Right ventricle myocardium inferior (tissue), 1 donor: ENCODE measurements at regions of chr9 and their contacts with region 1.

Region 1: GRCh38 chr9:35657546-35658136 is at the start of gene RMRP:
- DNase-seq: peak; percentile 97
- ATAC-seq: peak; percentile 97
- total RNA-seq, gene RMRP: 15,747 TPM

Region 2: DNA sequence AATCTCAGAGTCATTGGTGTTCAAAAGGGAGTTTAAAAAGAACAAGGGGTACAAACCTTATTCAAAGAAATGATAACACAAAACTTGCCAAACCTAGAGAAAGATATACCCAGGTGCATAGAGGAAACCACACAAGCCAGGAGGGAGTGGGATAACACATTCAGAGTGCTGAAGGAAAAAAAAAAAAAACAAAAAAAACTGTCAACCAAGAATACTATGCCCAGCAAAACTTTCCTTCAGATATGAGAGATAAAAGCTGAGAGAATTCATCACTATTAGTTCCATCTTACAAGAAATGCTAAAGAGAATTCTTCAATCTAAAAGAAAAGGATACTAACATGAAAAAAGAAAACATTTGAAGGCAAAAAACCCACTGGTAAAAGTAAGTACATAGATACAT is 64.1 kb before region 1 on chr9:
- intact Hi-C with region 1: no loop called
- DNase-seq: no peak
- ATAC-seq: no peak

Region 3: GRCh38 chr9:35603987-35604577 is 53.6 kb before region 1 on chr9:
- intact Hi-C with region 1: loop called (anchors 2 kb)
- DNase-seq: peak; percentile 100
- ATAC-seq: peak; percentile 97

Region 4: DNA sequence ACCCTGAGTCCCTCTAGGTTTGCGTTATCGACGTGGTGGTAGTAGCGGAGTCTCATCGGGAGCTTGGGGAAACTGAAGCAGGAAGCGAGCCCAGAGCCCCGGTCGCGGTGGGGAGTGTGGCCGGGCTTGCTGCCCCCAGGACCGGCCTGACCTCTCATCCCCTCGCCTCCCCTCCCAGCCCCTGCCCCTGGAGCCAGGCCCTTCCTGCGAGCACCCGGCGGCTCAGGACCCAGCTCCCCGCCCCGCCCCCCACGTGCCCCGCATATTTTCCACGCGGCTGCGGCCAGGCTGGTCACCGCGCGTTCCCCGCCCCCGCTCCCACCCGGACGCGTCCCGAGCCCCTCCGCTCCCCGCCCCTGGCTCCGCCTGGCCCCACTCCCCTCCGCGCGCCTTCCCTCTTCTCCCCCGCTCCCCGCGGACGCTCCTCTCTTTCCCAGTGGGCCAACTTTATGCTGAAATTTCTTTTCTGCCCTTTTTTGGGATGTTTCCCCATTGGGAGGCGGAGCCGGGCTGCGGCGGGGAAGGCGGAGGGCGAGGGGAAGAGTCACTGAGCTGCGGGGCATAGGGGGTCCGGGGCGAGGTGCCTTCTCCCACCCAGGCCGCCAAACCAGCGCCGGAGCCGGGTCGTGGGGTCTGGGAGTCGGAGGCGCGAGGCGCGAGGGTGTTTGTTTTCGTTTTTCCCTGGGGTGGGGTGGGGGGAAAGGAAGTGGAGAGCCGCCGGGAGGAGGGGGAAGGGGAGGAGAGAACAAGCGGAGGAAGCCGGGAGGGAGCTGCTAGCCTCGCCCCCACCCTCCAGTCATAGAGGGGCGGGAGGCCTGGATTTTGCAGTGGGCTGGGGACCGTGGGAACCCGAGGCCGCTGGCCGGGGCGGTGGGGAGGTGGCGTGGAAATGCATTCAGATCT is 33.0 kb after region 1 on chr9:
- intact Hi-C with region 1: loop called (anchors 2 kb)
- DNase-seq: peak; percentile 87
- ATAC-seq: peak; percentile 69

Region 5: GRCh38 chr9:35732122-35732799 is 74.6 kb after region 1 on chr9 and contains the starts of genes CREB3 and TLN1:
- intact Hi-C with region 1: loop called (anchors 2 kb)
- DNase-seq: peak; percentile 99
- ATAC-seq: peak; percentile 94
- total RNA-seq, gene CREB3: 23.5 TPM
- total RNA-seq, gene TLN1: 255 TPM

Region 6: GRCh38 chr9:35754264-35754663 is 96.6 kb after region 1 on chr9 and contains the start of gene MSMP:
- intact Hi-C with region 1: loop called (anchors 1 kb)
- DNase-seq: no peak
- ATAC-seq: no peak
- total RNA-seq, gene MSMP: not detected

Region 7: GRCh38 chr9:35829084-35829763 is 171.6 kb after region 1 on chr9 and contains the start of gene TMEM8B:
- intact Hi-C with region 1: loop called (anchors 5 kb)
- DNase-seq: peak; percentile 99
- ATAC-seq: peak; percentile 92
- total RNA-seq, gene TMEM8B: 13.8 TPM